GM10248 (cell line): ENCODE measurements at regions of chr16 and their contacts with region 1.

Region 1: GRCh38 chr16:47141773-47142485 is 1.8 kb downstream of the NETO2 start:
- DNase-seq: peak; percentile 79
- CTCF ChIP-seq: peak; percentile 97

Region 2: DNA sequence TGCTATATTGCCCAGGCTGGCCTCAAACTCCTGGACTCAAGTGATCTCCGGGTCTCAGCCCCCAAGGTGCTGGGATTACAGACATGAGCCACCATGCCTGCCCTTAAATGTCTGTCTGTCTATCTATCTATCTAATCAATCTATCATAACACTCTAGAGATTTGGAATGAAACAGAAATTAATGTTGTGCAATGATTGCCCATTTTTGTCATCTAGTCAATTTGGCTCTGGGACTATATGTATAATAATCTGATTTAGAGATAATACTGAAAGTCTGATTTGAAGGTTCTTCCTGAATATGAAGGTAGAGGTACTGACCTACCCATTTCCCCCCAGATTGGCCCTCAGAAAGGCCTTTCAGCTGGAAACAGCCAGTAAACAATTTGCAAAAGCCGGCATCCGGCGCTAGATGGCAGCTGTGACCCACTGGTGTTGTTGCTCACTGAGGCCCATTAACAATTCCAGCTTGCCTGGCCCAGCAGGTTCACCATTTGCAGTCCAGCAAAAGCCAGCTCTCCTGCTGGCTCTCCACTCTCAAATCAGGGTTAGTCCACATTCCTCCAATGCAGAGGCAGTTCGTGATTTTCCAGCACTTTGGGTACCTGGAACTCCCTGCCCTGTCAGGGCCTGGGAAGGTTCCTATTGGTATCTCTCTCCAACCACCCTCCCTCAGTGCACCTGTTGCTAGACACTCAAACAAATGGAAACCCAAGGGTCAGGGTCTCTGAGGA is 288.1 kb before region 1 on chr16:
- CTCF ChIA-PET with region 1: interaction called, 11 read pairs
- POLR2A ChIA-PET with region 1: no interaction called
- DNase-seq: peak; percentile 78
- CTCF ChIP-seq: peak; percentile 65

Region 3: GRCh38 chr16:47028767-47029377 is 113.1 kb before region 1 on chr16:
- CTCF ChIA-PET with region 1: interaction called, 11 read pairs
- POLR2A ChIA-PET with region 1: no interaction called
- DNase-seq: no peak
- CTCF ChIP-seq: no peak

Region 4: DNA sequence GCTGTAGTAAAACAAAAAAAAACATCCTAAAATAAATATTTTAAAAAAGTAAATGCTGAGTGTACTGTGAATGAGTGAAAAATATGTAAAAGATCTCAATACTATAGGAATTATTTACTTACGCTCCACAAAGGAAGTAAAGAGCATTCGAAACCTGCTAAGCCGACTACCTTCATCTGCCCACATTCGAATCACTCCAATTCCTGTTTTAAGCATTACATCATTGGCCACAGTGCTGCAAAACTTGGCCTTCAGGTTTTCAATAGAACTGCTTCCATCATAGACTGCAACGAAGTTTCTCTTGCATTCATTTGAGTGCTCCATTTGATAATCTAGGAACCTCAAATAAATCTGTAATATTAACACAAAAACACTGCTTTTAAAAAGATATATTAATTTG is 32.6 kb before region 1 on chr16:
- CTCF ChIA-PET with region 1: interaction called, 14 read pairs
- POLR2A ChIA-PET with region 1: interaction called, 3 read pairs
- DNase-seq: no peak
- CTCF ChIP-seq: no peak

Region 5: DNA sequence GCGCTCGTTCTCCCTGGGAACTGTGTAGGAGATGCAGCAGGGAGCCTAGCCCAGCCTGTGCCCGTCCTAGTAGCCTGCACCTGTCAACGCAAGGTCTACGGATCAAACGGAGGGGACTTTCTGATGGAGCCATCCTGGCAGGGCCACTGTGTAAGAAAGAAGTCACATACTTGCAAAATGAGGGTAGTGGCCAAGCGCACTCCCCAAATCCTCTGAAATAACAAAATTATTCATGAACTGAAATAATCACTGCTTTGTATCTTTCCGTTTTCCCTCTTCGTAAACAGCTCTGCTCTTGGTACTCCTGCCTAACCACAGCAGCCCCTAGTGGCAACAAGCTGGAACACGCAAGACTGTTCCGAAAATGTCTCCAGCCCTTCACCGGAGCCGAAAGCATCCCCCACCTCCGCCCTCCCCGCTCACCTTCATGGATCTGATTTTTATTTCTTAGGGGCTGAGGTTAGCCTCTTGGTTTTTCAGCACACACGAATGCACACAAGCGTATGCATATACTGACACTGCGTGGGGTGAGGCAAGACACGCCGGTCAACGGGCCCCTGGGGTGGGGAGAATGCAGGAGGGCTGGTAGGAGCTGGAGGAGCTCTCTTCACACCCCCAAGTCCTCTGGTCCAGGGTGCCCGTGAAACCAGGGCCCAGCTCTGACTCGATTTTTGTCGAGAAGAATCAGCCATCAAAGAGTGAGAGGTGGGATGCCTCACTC is 913.1 kb after region 1 on chr16:
- CTCF ChIA-PET with region 1: interaction called, 44 read pairs
- POLR2A ChIA-PET with region 1: no interaction called
- DNase-seq: peak; percentile 69
- CTCF ChIP-seq: peak; percentile 94

Region 6: GRCh38 chr16:48123104-48123788 is 981.3 kb after region 1 on chr16:
- CTCF ChIA-PET with region 1: interaction called, 33 read pairs
- POLR2A ChIA-PET with region 1: no interaction called
- DNase-seq: peak; percentile 59
- CTCF ChIP-seq: no peak